ENCODE measurements at regions of chr2 and their contacts with region 1.

Region 1: GRCh38 chr2:171433763-171434670 is at the starts of genes DCAF17 and METTL8:
- DNase-seq: peak; percentile 96 to 98 (median 97)
- ATAC-seq: peak; percentile 98 to 99 (median 99)
- H3K4me3 ChIP-seq: peak within 1 kb of the TSS; percentile 61 to 95 (median 84)
- H3K27ac ChIP-seq: peak within 1 kb of the TSS; percentile 82 to 100 (median 98)
- H3K4me1 ChIP-seq: peaks cover 3 to 18% (median 10%) of the 10 kb centered on the region in 12 donors
- H3K27me3 ChIP-seq: no peaks in the 10 kb centered on the region
- CTCF ChIP-seq: peak in 10 of 12 donors; percentile 4 to 66 (median 42)
- POLR2A ChIP-seq: peak in 1 of 2 donors; percentile 74
- total RNA-seq, gene DCAF17: 5.9 to 16.7 (median 8.4) TPM
- total RNA-seq, gene METTL8: 7.4 to 18.5 (median 11.2) TPM

Region 2: DNA sequence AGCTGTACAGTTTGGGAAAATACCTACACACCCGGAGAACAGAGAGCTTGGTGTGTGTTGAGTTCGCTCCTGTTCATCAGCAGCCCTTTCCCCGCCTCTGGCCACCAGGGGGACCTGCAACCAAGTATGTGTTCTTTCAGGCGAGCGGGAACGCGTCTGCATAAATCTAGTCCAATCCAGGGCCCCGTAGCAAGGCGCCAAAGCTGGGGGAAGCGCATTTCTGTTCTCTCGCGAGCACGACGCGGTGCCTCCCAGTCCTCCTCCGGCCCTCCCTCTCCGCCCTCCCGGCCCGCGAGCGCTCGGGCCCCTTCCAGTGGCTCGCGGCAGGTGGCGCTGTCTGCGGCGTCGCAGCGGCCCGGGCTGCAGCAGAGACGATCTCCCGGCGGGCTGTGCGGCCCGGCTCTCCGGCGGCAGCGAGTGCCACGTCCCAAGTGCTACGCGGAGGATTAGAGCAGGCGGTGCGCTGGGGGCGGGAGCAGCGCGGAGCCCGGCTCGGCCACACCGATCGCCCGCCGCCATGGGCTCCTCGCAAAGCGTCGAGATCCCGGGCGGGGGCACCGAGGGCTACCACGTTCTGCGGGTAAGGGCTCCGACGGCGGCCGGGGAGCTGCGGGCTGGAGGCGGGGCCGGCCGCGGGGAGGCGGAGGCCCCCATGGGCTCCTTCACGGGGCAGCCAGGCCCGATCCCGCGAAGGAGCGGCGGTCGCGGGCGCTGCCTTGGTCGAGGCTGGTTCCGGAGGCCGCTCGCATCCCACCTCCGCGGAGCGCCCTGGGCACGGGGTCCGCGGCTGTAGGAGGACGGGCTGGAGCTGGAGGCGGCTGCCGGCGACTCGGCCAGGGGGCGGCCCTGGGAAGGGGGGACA is 505.0 kb before region 1 on chr2 and contains the start of gene GORASP2:
- intact Hi-C with region 1: loop called in 1 of 10 experiments (anchors 2 kb)
- DNase-seq: peak; percentile 98 to 99 (median 99)
- ATAC-seq: peak; percentile 96 to 99 (median 98)
- H3K4me3 ChIP-seq: peak within 1 kb of the TSS; percentile 73 to 97 (median 91)
- H3K27ac ChIP-seq: peak within 1 kb of the TSS; percentile 82 to 97 (median 94)
- H3K4me1 ChIP-seq: peaks cover 0 to 46% (median 32%) of the 10 kb centered on the region in 12 donors
- H3K27me3 ChIP-seq: no peaks in the 10 kb centered on the region
- CTCF ChIP-seq: peak in 10 of 12 donors; percentile 95 to 100 (median 98)
- POLR2A ChIP-seq: peak; percentile 32 to 80
- total RNA-seq, gene GORASP2: 47.5 to 76.1 (median 62.6) TPM

Region 3: GRCh38 chr2:170973492-170974303 is 460.3 kb before region 1 on chr2:
- intact Hi-C with region 1: loop called in 4 of 10 experiments (anchors 5 kb)
- DNase-seq: peak; percentile 82 to 91 (median 86)
- ATAC-seq: peak; percentile 79 to 96 (median 94)
- H3K4me3 ChIP-seq: peak overlapping the region; percentile 48 to 96 (median 73)
- H3K27ac ChIP-seq: peak overlapping the region; percentile 56 to 89 (median 79)
- H3K4me1 ChIP-seq: peaks cover 0 to 16% (median 6%) of the 10 kb centered on the region in 12 donors
- H3K27me3 ChIP-seq: no peaks in the 10 kb centered on the region
- CTCF ChIP-seq: peak; percentile 67 to 99 (median 96)
- POLR2A ChIP-seq: peak in 1 of 2 donors; percentile 24

Region 4: GRCh38 chr2:171390941-171391516 is 43.0 kb before region 1 on chr2:
- intact Hi-C with region 1: no loop called
- DNase-seq: no peak
- ATAC-seq: no peak
- H3K4me3 ChIP-seq: no peak overlapping the region
- H3K27ac ChIP-seq: no peak overlapping the region
- H3K4me1 ChIP-seq: peaks cover 0 to 6% (median 0%) of the 10 kb centered on the region in 12 donors
- H3K27me3 ChIP-seq: no peaks in the 10 kb centered on the region
- CTCF ChIP-seq: no peak
- POLR2A ChIP-seq: no peak

Region 5: GRCh38 chr2:171522052-171522787 is 88.2 kb after region 1 on chr2 and contains the start of gene CYBRD1:
- intact Hi-C with region 1: loop called in 7 of 10 experiments (anchors 2 to 10 kb)
- DNase-seq: peak; percentile 84 to 93 (median 90)
- ATAC-seq: peak; percentile 65 to 90 (median 86)
- H3K4me3 ChIP-seq: peak within 1 kb of the TSS; percentile 78 to 97 (median 86)
- H3K27ac ChIP-seq: peak within 1 kb of the TSS; percentile 81 to 95 (median 92)
- H3K4me1 ChIP-seq: peaks cover 0 to 43% (median 20%) of the 10 kb centered on the region in 12 donors
- H3K27me3 ChIP-seq: no peaks in the 10 kb centered on the region
- CTCF ChIP-seq: peak in 1 of 12 donors; percentile 17
- POLR2A ChIP-seq: peak in 1 of 2 donors; percentile 75
- total RNA-seq, gene CYBRD1: 19.3 to 138 (median 49.9) TPM

Region 6: DNA sequence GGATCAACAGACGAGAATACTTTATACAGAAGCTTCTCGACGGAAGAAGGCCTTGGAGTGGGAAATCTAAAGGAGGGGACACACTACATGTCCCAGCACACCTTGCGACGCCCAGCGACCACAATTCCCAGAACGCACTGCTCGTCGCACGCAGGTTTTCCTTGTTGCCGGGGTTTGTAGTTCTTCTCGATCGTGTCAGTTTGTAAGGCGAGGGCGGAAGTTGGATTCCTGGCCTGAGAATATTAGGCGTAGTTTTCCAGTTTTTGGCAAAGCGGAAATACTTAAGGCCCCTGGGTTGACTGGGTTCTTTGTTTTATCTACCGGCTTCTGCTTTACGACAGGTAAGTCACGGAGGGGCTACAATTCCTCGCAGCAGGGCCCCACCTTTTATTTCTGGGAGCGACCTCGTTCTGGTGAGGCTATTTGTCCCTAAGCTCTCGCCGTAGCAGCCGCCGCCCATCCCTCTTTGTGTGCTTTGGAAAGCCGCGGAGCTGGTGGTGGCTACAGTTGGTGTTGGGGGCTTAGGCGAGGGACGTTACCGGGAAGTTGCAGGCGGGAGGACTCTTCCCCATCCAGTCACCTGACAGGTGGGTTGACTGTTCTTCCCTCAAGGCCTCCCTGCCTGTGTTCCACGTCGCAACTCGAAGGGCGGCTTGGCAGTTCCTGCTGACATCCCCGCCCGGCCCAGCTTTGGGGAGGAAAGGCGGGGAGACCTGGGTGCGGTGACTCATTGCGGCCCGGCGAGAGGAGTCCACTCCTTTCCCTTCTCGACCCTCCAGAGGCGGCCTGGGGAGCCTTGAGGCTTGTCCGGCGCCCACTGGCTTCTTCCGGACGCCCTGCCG is 253.5 kb after region 1 on chr2 and contains the start of gene DYNC1I2:
- intact Hi-C with region 1: loop called in 1 of 10 experiments (anchors 10 kb)
- DNase-seq: peak; percentile 91 to 95 (median 93)
- ATAC-seq: peak; percentile 98 to 99 (median 98)
- H3K4me3 ChIP-seq: peak within 1 kb of the TSS; percentile 64 to 92 (median 87)
- H3K27ac ChIP-seq: peak within 1 kb of the TSS; percentile 66 to 96 (median 90)
- H3K4me1 ChIP-seq: peaks cover 0 to 35% (median 15%) of the 10 kb centered on the region in 12 donors
- H3K27me3 ChIP-seq: peaks cover 0 to 2% (median 0%) of the 10 kb centered on the region in 9 donors
- CTCF ChIP-seq: no peak
- POLR2A ChIP-seq: no peak
- total RNA-seq, gene DYNC1I2: 66.7 to 92.9 (median 74.0) TPM

Measured in heart left ventricle (tissue), 16 donors.